SK-N-SH (cell line): ENCODE measurements at regions of chr17 and their contacts with region 1.

Region 1: GRCh38 chr17:75271233-75271954 is 363 bp upstream of the MIF4GD start:
- DNase-seq: peak; percentile 100
- H3K4me3 ChIP-seq: peak overlapping the region; percentile 74 to 79
- H3K27ac ChIP-seq: peak overlapping the region; percentile 51 to 97; a peak in 3 of 4 replicates
- H3K4me1 ChIP-seq: peaks cover 24 to 44% of the 10 kb centered on the region in 2 experiments; a peak in 3 of 4 replicates
- H3K27me3 ChIP-seq: no peaks in the 10 kb centered on the region
- CTCF ChIP-seq: peak; percentile 62
- EP300 ChIP-seq: no peak
- RAD21 ChIP-seq: peak; percentile 17; the same call in 1 of the 2 replicates

Region 2: GRCh38 chr17:74686761-74687160 is 584.6 kb before region 1 on chr17:
- CTCF ChIA-PET with region 1: no interaction called
- POLR2A ChIA-PET with region 1: no interaction called
- DNase-seq: no peak
- H3K4me3 ChIP-seq: no peak overlapping the region
- H3K27ac ChIP-seq: no peak overlapping the region
- H3K4me1 ChIP-seq: no peaks in the 10 kb centered on the region
- H3K27me3 ChIP-seq: no peaks in the 10 kb centered on the region
- CTCF ChIP-seq: no peak
- EP300 ChIP-seq: no peak
- RAD21 ChIP-seq: no peak

Region 3: DNA sequence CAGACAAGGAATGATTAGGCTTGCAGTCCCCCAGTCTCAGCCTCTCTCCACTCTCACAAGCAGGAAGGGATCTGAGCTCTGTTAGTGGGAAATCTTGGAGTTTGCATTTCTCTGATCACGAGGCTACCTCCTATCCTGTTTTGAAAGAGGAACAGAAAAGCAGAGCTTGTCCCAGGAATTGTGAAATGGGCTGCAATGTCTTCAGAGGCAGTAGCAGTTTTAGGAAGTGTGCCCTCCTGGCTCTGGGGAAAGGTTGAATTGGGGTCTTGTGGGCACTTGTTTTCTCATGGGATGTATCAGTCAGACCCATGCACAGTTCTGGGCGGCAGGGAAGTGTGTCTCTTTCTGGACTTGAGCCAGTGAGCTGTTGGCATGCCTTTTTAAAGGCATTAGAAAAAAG is 43.1 kb before region 1 on chr17:
- CTCF ChIA-PET with region 1: interaction called, 11 read pairs
- POLR2A ChIA-PET with region 1: interaction called, 3 read pairs
- DNase-seq: no peak
- H3K4me3 ChIP-seq: no peak overlapping the region
- H3K27ac ChIP-seq: no peak overlapping the region
- H3K4me1 ChIP-seq: no peaks in the 10 kb centered on the region
- H3K27me3 ChIP-seq: no peaks in the 10 kb centered on the region
- CTCF ChIP-seq: no peak
- EP300 ChIP-seq: no peak
- RAD21 ChIP-seq: no peak

Region 4: DNA sequence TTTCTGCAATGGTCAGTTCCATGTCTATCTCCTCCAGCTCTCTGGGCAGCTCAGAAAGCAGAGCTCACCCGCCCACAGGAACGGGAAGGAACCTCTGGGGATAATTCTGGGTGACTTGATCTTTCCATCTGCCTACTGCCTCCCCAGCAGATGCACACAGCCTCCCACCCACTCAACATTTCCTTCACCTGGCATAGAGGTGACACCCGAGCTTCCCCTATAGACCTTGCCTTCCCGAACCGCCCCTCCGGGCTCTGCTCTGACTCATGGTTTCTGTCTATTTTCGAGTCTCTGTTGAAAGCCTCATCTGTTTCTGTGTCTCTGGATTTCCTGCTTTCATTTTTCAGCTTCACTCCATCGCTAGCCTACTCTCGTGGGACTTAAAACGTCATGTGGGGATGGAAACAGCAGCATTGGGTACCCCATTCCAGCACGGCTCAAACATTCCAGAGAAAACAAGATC is 21.4 kb before region 1 on chr17:
- CTCF ChIA-PET with region 1: interaction called, 15 read pairs
- POLR2A ChIA-PET with region 1: no interaction called
- DNase-seq: no peak
- H3K4me3 ChIP-seq: no peak overlapping the region
- H3K27ac ChIP-seq: no peak overlapping the region
- H3K4me1 ChIP-seq: peaks cover 0 to 4% of the 10 kb centered on the region in 2 experiments; a peak in 1 of 4 replicates
- H3K27me3 ChIP-seq: no peaks in the 10 kb centered on the region
- CTCF ChIP-seq: no peak
- EP300 ChIP-seq: no peak
- RAD21 ChIP-seq: no peak

Region 5: DNA sequence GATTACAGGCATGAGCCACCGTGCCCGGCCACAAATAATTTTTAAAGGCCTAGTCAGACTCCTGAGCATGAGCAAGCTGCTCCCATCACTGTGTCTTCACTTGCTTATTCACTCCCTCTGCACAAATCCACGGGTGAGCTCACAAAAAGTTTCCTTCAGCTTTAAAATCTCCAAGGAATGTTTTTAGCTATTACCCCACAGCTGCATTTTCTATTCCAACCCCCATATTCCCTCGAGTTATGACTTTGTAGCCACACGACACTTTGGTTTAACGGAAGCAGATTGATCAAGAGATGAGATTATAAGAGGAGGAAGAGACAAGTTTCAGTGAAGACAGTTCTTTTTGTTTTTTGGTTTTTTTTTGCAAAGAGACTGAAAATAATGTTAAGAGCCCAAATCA is 66.9 kb after region 1 on chr17:
- CTCF ChIA-PET with region 1: interaction called, 19 read pairs
- POLR2A ChIA-PET with region 1: no interaction called
- DNase-seq: no peak
- H3K4me3 ChIP-seq: no peak overlapping the region
- H3K27ac ChIP-seq: peak overlapping the region in 1 of 2 experiments; percentile 19; a peak in 1 of 4 replicates
- H3K4me1 ChIP-seq: peaks cover 6 to 9% of the 10 kb centered on the region in 2 experiments; a peak in 3 of 4 replicates
- H3K27me3 ChIP-seq: no peaks in the 10 kb centered on the region
- CTCF ChIP-seq: no peak
- EP300 ChIP-seq: no peak
- RAD21 ChIP-seq: no peak

Region 6: GRCh38 chr17:75405365-75406221 is 134.2 kb after region 1 on chr17 and contains the start of gene GRB2:
- CTCF ChIA-PET with region 1: interaction called, 36 read pairs
- POLR2A ChIA-PET with region 1: interaction called, 7 read pairs
- DNase-seq: peak; percentile 100
- H3K4me3 ChIP-seq: peak within 1 kb of the TSS; percentile 82 to 86
- H3K27ac ChIP-seq: peak within 1 kb of the TSS; percentile 69 to 70
- H3K4me1 ChIP-seq: peaks cover 4 to 6% of the 10 kb centered on the region in 2 experiments; a peak in 3 of 4 replicates
- H3K27me3 ChIP-seq: no peaks in the 10 kb centered on the region; the same call in 1 of the 2 replicates
- CTCF ChIP-seq: no peak
- EP300 ChIP-seq: no peak; a peak in 1 of 4 replicates
- RAD21 ChIP-seq: no peak
- polyA plus RNA-seq, gene GRB2: 81.6 and 89.6 TPM in 2 replicates